Psoas muscle (tissue), 8 donors: ENCODE measurements at regions of chr11 and their contacts with region 1.

Region 1: GRCh38 chr11:1502954-1503707 is 16.6 kb upstream of the MOB2 start:
- DNase-seq: peak in 1 of 2 donors; percentile 59
- ATAC-seq: peak; percentile 23 to 45 (median 34)
- H3K4me3 ChIP-seq: no peak overlapping the region
- H3K27ac ChIP-seq: peak overlapping the region; percentile 39
- H3K4me1 ChIP-seq: peaks cover 67% of the 10 kb centered on the region
- H3K27me3 ChIP-seq: no peaks in the 10 kb centered on the region
- CTCF ChIP-seq: no peak

Region 2: GRCh38 chr11:1271002-1271401 is 232.1 kb before region 1 on chr11:
- intact Hi-C with region 1: loop called in 1 of 2 experiments (anchors 10 kb)
- DNase-seq: peak in 1 of 2 donors; percentile 32
- ATAC-seq: no peak
- H3K4me3 ChIP-seq: no peak overlapping the region
- H3K27ac ChIP-seq: no peak overlapping the region
- H3K4me1 ChIP-seq: no peaks in the 10 kb centered on the region
- H3K27me3 ChIP-seq: no peaks in the 10 kb centered on the region
- CTCF ChIP-seq: no peak